Posterior vena cava (tissue), 2 donors: ENCODE measurements at regions of chr6 and their contacts with region 1.

Region 1: GRCh38 chr6:41505122-41506049 is 40.8 kb upstream of the FOXP4 start:
- DNase-seq: peak; percentile 96

Region 2: DNA sequence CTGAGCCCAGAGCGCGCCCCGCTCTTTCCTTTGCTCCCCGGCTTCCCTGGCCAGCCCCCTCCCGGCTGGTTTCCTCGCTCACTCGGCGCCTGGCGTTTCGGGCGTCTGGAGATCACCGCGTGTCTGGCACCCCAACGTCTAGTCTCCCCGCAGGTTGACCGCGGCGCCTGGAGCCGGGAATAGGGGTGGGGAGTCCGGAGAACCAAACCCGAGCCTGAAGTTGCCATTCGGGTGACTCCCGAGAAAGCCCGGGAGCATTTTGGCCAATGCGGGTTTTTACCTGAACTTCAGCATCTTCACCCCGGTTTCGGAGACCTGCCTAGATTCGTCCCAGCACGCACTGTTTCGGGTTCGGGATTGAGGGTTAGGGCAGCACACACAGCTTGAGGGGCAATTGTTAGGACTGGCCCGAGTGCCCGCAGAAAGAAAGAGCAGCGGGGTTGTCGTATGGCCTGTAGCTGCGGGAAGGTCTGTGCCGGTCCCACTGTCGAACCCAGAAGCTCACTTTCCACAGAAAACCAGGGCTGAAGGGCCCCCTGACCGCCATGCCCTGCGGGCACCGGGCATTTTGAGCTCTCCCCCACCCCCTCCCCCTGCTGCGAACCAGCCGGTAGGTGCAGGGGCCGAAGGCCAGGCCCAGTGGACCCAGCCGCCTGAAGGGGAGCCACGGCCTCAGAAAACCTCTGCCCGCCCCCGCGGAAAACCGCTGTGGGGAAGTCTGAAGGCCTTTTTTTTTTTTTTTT is 42.9 kb after region 1 on chr6:
- intact Hi-C with region 1: loop called in 1 of 2 experiments (anchors 2 kb)
- DNase-seq: no peak

Region 3: DNA sequence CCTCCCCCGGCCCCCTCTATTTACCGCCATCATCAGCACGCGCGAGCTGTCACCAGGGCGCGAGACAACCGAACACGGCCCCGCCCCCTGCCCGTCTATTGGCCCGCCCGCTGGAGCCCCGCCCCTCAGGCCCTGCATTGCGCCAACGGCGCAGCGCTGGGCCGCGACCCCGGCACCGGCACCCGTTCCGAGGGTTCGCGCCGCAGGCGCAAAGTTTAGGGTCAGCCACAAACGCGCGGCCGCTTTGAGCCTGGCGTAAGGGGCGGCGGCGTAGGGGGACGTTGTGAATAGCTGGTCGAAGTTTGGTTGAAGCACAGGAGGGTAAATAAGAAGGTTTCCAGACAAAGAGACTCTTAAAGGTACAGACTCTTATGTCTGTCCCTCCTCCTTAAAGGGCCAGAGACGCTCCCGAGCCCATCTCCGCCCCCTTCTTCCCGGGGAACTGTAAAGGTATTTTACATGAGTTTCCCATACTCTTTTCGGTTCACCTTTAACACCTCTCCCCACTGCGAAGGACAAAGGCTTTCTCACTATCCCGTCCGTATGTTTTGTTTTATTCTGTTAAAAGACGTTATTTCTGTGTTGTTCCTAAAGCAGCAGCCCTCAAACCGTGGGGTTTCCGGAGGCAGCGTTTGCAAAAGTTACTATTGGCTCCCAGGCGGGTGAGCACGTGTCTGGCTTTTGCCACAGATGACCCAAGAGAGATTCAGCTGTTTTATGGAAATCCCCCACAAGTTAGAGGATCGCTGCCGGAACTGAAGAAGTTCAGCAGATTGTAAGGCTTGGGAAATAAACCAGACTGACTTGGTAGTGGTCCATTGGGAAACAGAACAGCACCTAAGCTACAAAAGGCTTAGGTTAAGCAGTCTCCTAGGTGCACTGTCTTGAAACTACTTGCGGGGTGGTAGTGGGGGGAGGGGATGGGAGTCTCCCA is 390.2 kb after region 1 on chr6 and contains the start of gene USP49:
- intact Hi-C with region 1: loop called in 1 of 2 experiments (anchors 10 kb)
- DNase-seq: peak; percentile 96
- total RNA-seq, gene USP49: 2.7 to 3.1 TPM